Ovary (tissue), 10 donors: ENCODE measurements at regions of chr7 and their contacts with region 1.

Region 1: DNA sequence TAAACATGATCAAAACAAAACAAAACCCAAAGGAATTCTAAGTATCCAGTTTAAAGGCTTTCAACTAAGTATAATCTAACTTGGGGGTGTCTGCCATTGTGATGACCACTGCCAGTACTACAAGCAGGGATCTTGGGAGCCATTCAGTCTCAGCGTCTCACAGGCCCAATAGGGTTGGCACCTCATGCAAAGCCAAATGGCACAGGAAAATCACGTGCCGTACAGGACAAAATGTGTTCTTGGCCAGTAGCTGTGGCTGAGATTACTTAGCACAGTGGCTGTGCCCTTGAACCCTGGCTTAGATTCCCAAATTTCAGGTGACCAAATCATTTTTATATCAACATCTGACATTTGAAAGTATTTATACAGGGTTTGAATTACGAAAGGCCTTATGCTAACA is 50.0 kb downstream of the DLD start:
- DNase-seq: no peak
- H3K4me3 ChIP-seq: no peak overlapping the region
- H3K27ac ChIP-seq: no peak overlapping the region
- H3K4me1 ChIP-seq: peaks cover 18% of the 10 kb centered on the region
- H3K27me3 ChIP-seq: no peaks in the 10 kb centered on the region
- CTCF ChIP-seq: no peak
- EP300 ChIP-seq: no peak
- POLR2A ChIP-seq: no peak

Region 2: GRCh38 chr7:107890962-107891635 is 49.9 kb before region 1 on chr7 and contains the start of gene DLD:
- intact Hi-C with region 1: no loop called
- DNase-seq: peak; percentile 91 to 96 (median 94)
- H3K4me3 ChIP-seq: peak within 1 kb of the TSS; percentile 80
- H3K27ac ChIP-seq: peak within 1 kb of the TSS; percentile 84 to 87
- H3K4me1 ChIP-seq: peaks cover 2% of the 10 kb centered on the region
- H3K27me3 ChIP-seq: no peaks in the 10 kb centered on the region
- CTCF ChIP-seq: peak in 2 of 3 donors; percentile 36 to 37
- EP300 ChIP-seq: no peak
- POLR2A ChIP-seq: peak; percentile 92
- total RNA-seq, gene DLD: 35.4 to 72.1 (median 49.7) TPM

Region 3: DNA sequence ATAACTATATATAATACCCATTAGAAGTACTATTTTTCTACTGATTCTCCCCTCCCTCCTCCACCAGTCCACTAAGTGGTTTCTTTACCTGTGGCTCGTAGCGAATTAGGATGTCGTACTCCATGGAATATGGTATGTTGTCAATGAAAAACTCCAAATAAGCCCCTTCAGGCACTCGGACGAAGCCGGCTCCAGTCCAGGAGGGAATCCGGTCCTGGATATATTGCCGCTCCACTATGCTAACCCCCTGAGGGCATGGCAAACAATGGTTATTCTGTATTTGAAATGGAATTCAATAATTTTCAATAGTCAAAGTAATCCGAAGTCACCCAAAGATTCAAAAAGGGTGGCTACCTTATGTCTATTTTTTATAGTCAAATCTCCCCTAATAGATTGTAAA is 21.9 kb after region 1 on chr7:
- intact Hi-C with region 1: loop called in 1 of 4 experiments (anchors 1 kb)
- DNase-seq: no peak
- H3K4me3 ChIP-seq: no peak overlapping the region
- H3K27ac ChIP-seq: no peak overlapping the region
- H3K4me1 ChIP-seq: peaks cover 12% of the 10 kb centered on the region
- H3K27me3 ChIP-seq: no peaks in the 10 kb centered on the region
- CTCF ChIP-seq: no peak
- EP300 ChIP-seq: no peak
- POLR2A ChIP-seq: no peak